H1 (cell line): ENCODE measurements at regions of chr11 and their contacts with region 1.

Region 1: DNA sequence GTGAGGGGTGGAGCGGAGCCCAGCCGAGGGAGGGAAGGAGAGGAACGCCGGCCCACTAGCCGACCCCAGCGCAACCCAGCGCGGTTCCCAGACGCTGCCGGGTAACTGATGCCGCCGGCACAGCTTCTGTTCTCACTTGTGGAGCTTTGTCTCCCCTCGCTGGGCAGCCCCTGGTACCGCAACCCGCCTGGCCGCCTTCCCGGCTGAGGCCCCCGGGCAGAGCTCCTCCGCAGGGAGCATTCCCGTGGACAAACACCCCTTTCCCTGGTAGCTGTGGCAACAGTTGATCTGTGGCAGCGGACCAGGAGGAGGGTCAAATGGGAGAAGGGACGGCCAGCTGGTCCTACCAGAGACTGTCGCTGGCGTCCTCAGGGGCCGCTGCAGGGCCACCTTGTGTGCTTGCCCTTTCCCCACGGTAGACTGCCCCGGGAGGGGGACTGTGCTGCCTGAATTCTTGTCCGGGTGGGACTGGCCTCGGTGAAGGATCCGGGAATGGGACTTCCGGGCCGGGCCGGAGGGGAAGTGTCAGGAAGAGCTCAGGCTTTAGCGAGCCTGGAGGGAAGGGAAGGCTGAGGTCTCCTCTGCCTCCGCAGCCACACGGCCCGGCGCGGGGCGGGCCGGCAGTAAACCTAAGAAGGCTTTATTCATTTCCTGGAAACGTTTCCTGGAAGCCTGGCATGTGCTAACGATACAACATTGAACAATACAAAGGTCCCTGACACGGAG is 468.0 kb downstream of the OPCML start:
- DNase-seq: peak; percentile 67 to 88
- H3K4me3 ChIP-seq: peak overlapping the region; percentile 55 to 64 (median 61)
- H3K27ac ChIP-seq: no peak overlapping the region
- H3K4me1 ChIP-seq: peaks cover under 1 to 6% (median 3%) of the 10 kb centered on the region in 4 experiments; a peak in 6 of 7 replicates
- H3K27me3 ChIP-seq: peaks cover 0 to 4% (median 0%) of the 10 kb centered on the region in 4 experiments; a peak in 1 of 7 replicates
- CTCF ChIP-seq: peak; percentile 81 to 88 (median 83)
- EP300 ChIP-seq: no peak
- POLR2A ChIP-seq: no peak; a peak in 1 of 3 replicates
- RAD21 ChIP-seq: peak; percentile 93 to 95

Region 2: GRCh38 chr11:132948252-132948651 is 116.1 kb before region 1 on chr11:
- CTCF ChIA-PET with region 1: interaction called, 131 read pairs
- POLR2A ChIA-PET with region 1: no interaction called
- DNase-seq: no peak
- H3K4me3 ChIP-seq: no peak overlapping the region
- H3K27ac ChIP-seq: no peak overlapping the region
- H3K4me1 ChIP-seq: no peaks in the 10 kb centered on the region; a peak in 1 of 7 replicates
- H3K27me3 ChIP-seq: peaks cover 0 to 18% (median 12%) of the 10 kb centered on the region in 4 experiments; a peak in 6 of 7 replicates
- CTCF ChIP-seq: no peak
- EP300 ChIP-seq: no peak
- POLR2A ChIP-seq: no peak
- RAD21 ChIP-seq: no peak